WTC11 (cell line): ENCODE measurements at regions of chr11 and their contacts with region 1.

Region 1: GRCh38 chr11:65329944-65330403 is 3.7 kb upstream of the DPF2 start:
- DNase-seq: peak; percentile 90
- ATAC-seq: peak; percentile 31
- H3K4me3 Mint-ChIP-seq: peak overlapping the region; percentile 31; the same call in 1 of the 2 replicates
- H3K27ac Mint-ChIP-seq: no peak overlapping the region
- H3K4me1 Mint-ChIP-seq: peaks cover 13% of the 10 kb centered on the region
- H3K27me3 Mint-ChIP-seq: peaks cover 5% of the 10 kb centered on the region
- CTCF ChIP-seq: peak; percentile 79

Region 2: GRCh38 chr11:65261591-65262380 is 68.2 kb before region 1 on chr11 and contains the start of gene POLA2:
- CTCF ChIA-PET with region 1: interaction called, 12 read pairs
- POLR2A ChIA-PET with region 1: interaction called, 4 read pairs
- DNase-seq: peak; percentile 88
- ATAC-seq: peak; percentile 92
- H3K4me3 Mint-ChIP-seq: peak within 1 kb of the TSS; percentile 92
- H3K27ac Mint-ChIP-seq: peak within 1 kb of the TSS; percentile 69
- H3K4me1 Mint-ChIP-seq: peaks cover 18% of the 10 kb centered on the region
- H3K27me3 Mint-ChIP-seq: peaks cover 13% of the 10 kb centered on the region
- CTCF ChIP-seq: no peak
- total RNA-seq, gene POLA2: 26.9 to 35.6 TPM (median 28.5 TPM) in 3 replicates

Region 3: GRCh38 chr11:65301491-65302329 is 28.3 kb before region 1 on chr11:
- CTCF ChIA-PET with region 1: interaction called, 13 read pairs
- POLR2A ChIA-PET with region 1: interaction called, 5 read pairs
- DNase-seq: peak; percentile 71
- ATAC-seq: peak; percentile 92
- H3K4me3 Mint-ChIP-seq: no peak overlapping the region
- H3K27ac Mint-ChIP-seq: no peak overlapping the region; the same call in 1 of the 2 replicates
- H3K4me1 Mint-ChIP-seq: peaks cover 13% of the 10 kb centered on the region
- H3K27me3 Mint-ChIP-seq: no peaks in the 10 kb centered on the region
- CTCF ChIP-seq: no peak

Region 4: GRCh38 chr11:65354265-65355012 is 24.5 kb after region 1 on chr11 and contains the start of gene TIGD3:
- CTCF ChIA-PET with region 1: interaction called, 30 read pairs
- POLR2A ChIA-PET with region 1: interaction called, 5 read pairs
- DNase-seq: peak; percentile 99
- ATAC-seq: peak; percentile 95
- H3K4me3 Mint-ChIP-seq: peak within 1 kb of the TSS; percentile 81
- H3K27ac Mint-ChIP-seq: peak within 1 kb of the TSS; percentile 19; the same call in 1 of the 2 replicates
- H3K4me1 Mint-ChIP-seq: peaks cover 10% of the 10 kb centered on the region
- H3K27me3 Mint-ChIP-seq: peaks cover 30% of the 10 kb centered on the region
- CTCF ChIP-seq: no peak
- total RNA-seq, gene TIGD3: 1.9 to 2.3 TPM (median 2.1 TPM) in 3 replicates